ENCODE measurements at regions of chr3 and their contacts with region 1.

Region 1: DNA sequence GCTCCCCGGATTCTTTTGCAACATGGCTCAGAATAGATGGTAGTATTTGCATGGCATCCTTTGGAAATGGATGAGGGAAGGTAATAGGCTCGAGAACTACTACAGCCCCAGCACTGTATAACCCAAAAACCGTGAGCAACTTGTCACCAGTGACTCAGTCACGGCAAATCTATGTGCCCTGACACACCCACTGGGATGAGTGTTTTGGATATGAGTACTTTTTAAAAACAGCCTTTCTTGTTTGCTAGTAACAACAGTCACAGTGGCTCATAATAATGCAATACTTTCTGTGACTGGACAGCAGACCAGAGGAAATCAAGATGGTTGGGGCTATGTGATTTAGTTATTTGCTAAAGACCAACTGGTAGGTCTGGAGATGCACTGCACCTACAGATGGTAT is 299.6 kb downstream of the ULK4 start:
- DNase-seq: no peak
- H3K4me3 ChIP-seq: no peak overlapping the region
- H3K27ac ChIP-seq: no peak overlapping the region
- H3K4me1 ChIP-seq: no peaks in the 10 kb centered on the region
- H3K27me3 ChIP-seq: no peaks in the 10 kb centered on the region
- CTCF ChIP-seq: no peak
- POLR2A ChIP-seq: no peak

Region 2: GRCh38 chr3:40068636-40069035 is 1593.7 kb before region 1 on chr3:
- intact Hi-C with region 1: no loop called
- DNase-seq: no peak
- H3K4me3 ChIP-seq: no peak overlapping the region
- H3K27ac ChIP-seq: no peak overlapping the region
- H3K4me1 ChIP-seq: no peaks in the 10 kb centered on the region
- H3K27me3 ChIP-seq: no peaks in the 10 kb centered on the region
- CTCF ChIP-seq: no peak
- POLR2A ChIP-seq: no peak

Region 3: DNA sequence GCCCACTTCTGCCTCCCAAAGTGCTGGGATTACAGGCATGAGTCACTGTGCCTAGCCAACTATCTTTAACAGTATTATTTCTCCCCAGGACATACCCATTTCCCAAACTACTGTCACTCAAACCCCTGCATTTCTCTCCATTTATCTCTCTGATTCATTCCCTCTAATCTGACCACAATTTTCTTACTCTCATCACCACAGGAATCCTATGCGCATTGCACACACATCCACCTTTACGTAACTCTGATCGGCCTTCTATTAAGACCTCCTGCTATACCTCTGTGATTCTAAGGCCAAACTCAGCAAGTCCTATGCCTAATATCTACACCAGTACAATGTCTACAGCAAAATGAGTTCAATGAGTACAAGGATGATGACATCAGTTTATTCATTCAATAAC is 64.6 kb after region 1 on chr3:
- intact Hi-C with region 1: loop called (anchors 5 kb)
- DNase-seq: no peak
- H3K4me3 ChIP-seq: no peak overlapping the region
- H3K27ac ChIP-seq: no peak overlapping the region
- H3K4me1 ChIP-seq: no peaks in the 10 kb centered on the region
- H3K27me3 ChIP-seq: no peaks in the 10 kb centered on the region
- CTCF ChIP-seq: no peak
- POLR2A ChIP-seq: no peak

Region 4: DNA sequence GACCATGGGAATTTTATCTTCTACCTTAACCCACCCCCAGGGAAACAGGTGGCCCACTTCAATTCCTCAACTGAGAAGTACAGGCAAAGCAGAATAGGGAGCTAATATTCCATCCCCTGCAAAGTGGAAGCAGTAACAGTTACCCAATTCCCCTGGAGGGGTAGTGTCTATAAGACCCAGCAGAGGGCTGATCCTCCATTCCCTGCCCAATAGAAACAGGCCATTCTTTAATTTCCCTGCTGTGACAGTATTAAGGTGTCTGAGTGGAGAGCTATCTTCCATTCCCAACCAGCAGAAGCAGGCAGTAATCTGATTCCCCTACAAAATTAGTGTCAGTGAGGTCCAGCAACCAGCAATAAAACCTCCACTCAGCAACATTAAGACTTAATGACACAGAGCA is 79.8 kb after region 1 on chr3:
- intact Hi-C with region 1: no loop called
- DNase-seq: no peak
- H3K4me3 ChIP-seq: no peak overlapping the region
- H3K27ac ChIP-seq: no peak overlapping the region
- H3K4me1 ChIP-seq: no peaks in the 10 kb centered on the region
- H3K27me3 ChIP-seq: no peaks in the 10 kb centered on the region
- CTCF ChIP-seq: no peak
- POLR2A ChIP-seq: no peak

Measured in breast epithelium (tissue), 4 donors.